Left cardiac atrium (tissue), 4 donors: ENCODE measurements at regions of chr21 and their contacts with region 1.

Region 1: GRCh38 chr21:30444204-30444603 is 4.1 kb downstream of the KRTAP15-1 start:
- DNase-seq: no peak
- ATAC-seq: no peak

Region 2: DNA sequence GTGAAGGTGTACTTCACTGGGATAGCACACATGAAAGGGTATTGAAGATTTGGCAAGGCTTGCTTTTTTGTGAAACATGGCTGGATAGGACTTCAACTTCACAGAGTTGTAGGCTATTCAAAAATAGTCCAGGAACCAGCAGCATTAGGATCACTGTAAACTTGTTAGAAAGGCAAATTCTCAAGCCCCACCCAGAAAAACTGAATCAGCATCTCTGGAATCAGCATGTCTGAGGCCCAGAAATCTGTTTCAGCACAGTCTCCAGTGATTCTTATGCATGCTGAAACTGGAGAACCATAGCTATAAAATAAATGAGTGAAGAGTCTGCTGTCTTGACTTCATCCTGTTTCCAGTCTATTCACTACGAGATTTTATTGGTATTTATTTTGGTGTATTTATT is 282.5 kb after region 1 on chr21:
- intact Hi-C with region 1: loop called in 1 of 2 experiments (anchors 10 kb)
- DNase-seq: no peak
- ATAC-seq: no peak

Region 3: DNA sequence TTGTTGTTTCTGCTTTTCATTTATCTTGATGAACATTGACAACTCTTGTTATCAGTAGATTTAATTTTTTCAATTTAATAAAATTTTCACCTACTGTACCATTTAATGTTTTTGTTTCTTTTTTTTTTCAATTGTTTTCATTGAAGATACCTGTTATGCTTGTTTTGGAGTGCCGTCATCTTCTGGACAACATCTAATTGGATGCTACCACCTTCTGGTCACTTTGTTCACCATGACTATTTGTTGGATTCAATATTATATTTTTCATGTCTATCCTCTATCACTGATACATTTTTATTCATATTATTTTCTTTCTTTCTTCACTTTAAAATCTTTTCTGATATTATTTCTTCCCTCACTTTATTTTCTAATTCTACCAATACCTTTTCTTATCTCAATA is 288.8 kb after region 1 on chr21:
- intact Hi-C with region 1: loop called (anchors 2 to 10 kb)
- DNase-seq: no peak
- ATAC-seq: no peak

Region 4: DNA sequence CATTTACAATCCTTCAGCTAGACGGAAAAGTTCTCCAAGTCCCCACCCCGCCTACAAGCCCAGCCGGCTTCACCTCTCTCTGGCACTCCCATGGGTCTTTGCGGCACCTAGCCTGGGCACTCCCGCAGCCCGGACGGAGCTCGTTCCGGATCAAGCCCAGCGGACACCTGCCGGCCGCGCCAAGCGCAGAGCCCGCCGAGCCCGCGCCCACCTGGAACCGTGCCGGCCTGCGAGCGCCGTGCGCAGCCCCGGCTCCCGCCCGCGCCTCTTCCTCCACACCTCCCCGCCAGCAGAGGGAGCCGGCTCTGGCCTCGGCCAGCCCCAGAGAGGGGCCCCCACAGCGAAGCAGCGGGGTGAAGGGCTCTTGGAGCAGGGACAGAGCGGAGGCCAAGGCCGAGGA is 644.1 kb after region 1 on chr21:
- intact Hi-C with region 1: loop called in 1 of 2 experiments (anchors 5 kb)
- DNase-seq: no peak
- ATAC-seq: no peak

Region 5: GRCh38 chr21:31198575-31198974 is 754.4 kb after region 1 on chr21:
- intact Hi-C with region 1: no loop called
- DNase-seq: no peak
- ATAC-seq: peak in 1 of 2 donors; percentile 48